Dendritic cell treated with granulocyte-macrophage colony-stimulating factor and Interleukin-4, amounts not matched to agents 40 ng/mL and 50 ng/mL, for 4 days (primary cell): ENCODE measurements at regions of chr3 and their contacts with region 1.

Region 1: DNA sequence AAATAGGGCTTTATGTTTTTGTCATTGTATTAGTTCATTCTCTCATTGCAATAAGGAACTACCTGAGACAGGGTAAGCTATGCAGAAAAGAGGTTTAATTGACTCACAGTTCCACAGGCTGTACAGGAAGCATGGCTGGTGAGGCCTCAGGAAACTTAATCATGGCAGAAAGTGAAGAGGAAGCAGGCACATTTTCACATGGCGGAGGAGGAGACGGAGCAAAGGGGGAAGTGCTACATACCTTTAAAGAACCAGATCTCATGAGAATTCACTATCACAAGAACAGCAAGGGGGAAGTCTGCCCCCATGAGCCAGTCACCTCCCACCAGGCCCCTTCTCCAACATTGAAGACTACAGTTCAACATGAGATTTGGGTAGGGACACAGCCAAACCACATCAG is 25.6 kb downstream of the CEP63 start:
- H3K4me3 Mint-ChIP-seq: no peak overlapping the region
- H3K27ac Mint-ChIP-seq: no peak overlapping the region
- H3K4me1 Mint-ChIP-seq: peaks cover 16% of the 10 kb centered on the region
- H3K27me3 Mint-ChIP-seq: no peaks in the 10 kb centered on the region

Region 2: DNA sequence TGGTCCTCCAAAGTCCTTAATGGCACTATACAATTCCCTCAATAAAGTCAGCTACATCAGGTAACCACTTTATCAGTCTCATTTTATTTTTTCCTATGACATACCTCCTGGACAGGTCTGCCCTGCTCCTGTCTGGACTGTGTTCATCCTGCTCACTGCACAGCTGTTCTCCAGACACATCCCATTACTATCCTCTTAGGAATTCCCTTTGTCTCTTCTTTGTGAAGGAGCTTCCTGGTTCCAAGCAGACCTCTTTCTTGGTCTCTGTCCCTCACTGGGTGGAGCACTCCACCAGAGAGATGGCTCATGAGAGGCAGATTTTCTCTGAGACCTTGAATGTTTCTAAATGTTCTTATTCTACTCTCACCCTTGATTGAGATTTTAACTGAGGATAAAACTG is 79.3 kb after region 1 on chr3:
- intact Hi-C with region 1: loop called (anchors 2 kb)
- H3K4me3 Mint-ChIP-seq: no peak overlapping the region
- H3K27ac Mint-ChIP-seq: no peak overlapping the region
- H3K4me1 Mint-ChIP-seq: peaks cover 18% of the 10 kb centered on the region
- H3K27me3 Mint-ChIP-seq: no peaks in the 10 kb centered on the region

Region 3: DNA sequence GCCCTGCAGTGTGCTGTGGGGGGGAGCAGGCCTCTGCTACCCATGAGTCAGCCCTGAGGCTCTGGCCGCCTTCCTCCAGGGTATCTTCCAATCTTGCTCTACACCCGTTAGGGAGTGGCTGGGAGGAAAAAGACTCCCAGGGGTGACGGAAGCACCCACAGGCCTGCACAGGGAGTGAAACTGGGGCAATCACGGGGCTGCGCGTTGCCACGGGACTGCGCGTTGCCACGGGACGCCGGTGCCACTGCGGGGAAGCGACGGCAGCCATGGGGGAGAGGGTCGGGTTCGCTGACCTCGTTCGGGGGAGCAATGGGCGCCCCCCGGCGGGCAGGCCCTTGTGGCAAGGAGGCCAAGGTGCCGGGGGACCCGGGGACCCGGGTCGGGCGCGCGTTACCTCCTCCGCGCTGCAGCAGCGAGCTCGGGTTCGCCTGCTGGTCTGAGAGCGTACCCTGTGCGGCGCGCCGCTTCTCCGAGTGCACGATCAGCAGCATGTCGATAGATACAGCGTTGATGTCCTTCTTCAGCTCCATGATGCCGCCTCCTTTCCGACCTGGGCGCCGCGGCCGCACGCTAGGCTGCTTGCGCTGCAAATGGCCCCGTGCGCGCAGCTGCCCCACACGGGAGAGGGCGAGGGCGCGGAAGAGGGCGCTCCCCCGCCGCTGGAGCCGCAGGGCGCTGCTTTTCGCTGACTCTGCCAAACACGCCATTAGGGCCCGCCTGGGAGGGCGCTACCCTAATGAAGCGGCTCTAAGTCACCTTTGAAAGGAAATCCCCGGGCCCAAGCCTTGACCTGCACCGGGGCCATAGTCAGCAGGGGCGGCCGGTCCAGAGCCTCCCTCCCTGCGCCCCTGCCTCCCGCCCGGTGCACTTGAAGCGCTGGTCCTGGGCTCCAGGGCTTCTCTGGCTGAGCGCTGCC is 139.2 kb after region 1 on chr3 and contains the start of gene KY:
- intact Hi-C with region 1: no loop called
- H3K4me3 Mint-ChIP-seq: peak within 1 kb of the TSS; percentile 66
- H3K27ac Mint-ChIP-seq: no peak within 1 kb of the TSS
- H3K4me1 Mint-ChIP-seq: peaks cover 10% of the 10 kb centered on the region
- H3K27me3 Mint-ChIP-seq: peaks cover 30% of the 10 kb centered on the region

Region 4: GRCh38 chr3:134965865-134966481 is 454.5 kb after region 1 on chr3:
- intact Hi-C with region 1: no loop called
- H3K4me3 Mint-ChIP-seq: no peak overlapping the region
- H3K27ac Mint-ChIP-seq: no peak overlapping the region
- H3K4me1 Mint-ChIP-seq: no peaks in the 10 kb centered on the region
- H3K27me3 Mint-ChIP-seq: no peaks in the 10 kb centered on the region